ENCODE measurements at regions of chr10 and their contacts with region 1.

Region 1: DNA sequence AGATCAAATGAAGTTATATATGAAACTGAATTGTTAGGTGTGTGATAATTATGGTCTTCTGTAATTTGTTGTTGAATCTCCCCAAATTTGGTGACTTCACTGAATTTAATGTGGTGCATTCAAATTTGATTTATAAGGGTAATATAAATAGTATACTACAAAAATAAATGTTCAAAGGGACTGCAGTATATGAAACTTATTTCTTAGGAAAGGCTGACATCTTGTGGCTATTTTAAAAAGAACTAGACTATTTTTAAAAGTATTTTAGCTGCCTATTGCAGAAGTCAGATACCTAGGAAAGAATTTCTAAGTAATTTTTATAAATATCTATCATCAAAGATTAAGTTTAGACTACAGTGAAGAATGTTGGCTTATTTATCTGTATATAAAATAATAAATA is 36.6 kb downstream of the ATRNL1 start:
- DNase-seq: no peak
- ATAC-seq: peak in 1 of 4 donors; percentile 46
- H3K4me3 ChIP-seq: no peak overlapping the region
- H3K27ac ChIP-seq: no peak overlapping the region
- H3K4me1 ChIP-seq: no peaks in the 10 kb centered on the region
- H3K27me3 ChIP-seq: no peaks in the 10 kb centered on the region
- CTCF ChIP-seq: peak; percentile 10 to 64 (median 38)
- POLR2A ChIP-seq: no peak

Region 2: DNA sequence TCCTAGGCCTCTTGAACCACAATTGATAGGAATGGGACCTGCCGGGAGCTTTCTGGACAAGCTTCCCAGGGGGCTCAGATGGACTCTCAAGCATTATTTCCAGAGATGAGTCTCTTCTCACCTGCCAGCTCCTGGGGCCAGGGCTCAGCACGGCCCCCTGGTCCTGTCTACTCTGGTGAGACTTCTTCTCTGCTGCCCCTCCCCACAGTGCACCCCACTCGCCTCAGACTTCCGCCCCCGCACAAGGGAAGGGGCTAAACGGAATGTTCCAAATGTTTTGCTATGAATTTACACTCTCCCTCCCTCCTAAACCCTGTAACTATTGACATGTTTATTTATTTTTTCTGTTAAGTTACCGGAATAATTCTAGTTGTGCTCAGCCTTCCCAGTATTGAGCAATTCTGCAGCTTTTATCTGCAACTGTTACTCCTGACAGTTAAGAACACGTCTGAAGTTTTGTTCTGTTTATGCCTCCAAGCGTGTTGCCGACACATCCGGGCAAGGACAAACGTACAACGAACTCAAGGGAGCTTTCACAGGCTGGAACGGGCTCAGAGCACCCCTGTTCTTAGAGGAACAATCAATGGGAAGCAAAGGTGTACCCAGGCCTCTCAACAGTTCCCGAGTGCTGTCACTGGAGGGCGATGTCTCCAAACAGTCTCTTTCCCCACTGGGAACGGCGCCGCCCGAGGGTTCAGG is 253.0 kb before region 1 on chr10:
- intact Hi-C with region 1: loop called (anchors 1 to 5 kb)
- DNase-seq: peak; percentile 44 to 76 (median 57)
- ATAC-seq: peak in 3 of 4 donors; percentile 77 to 90 (median 80)
- H3K4me3 ChIP-seq: no peak overlapping the region
- H3K27ac ChIP-seq: no peak overlapping the region
- H3K4me1 ChIP-seq: peaks cover 0 to 34% (median 0%) of the 10 kb centered on the region in 12 donors
- H3K27me3 ChIP-seq: no peaks in the 10 kb centered on the region
- CTCF ChIP-seq: peak; percentile 49 to 78 (median 68)
- POLR2A ChIP-seq: no peak

Region 3: DNA sequence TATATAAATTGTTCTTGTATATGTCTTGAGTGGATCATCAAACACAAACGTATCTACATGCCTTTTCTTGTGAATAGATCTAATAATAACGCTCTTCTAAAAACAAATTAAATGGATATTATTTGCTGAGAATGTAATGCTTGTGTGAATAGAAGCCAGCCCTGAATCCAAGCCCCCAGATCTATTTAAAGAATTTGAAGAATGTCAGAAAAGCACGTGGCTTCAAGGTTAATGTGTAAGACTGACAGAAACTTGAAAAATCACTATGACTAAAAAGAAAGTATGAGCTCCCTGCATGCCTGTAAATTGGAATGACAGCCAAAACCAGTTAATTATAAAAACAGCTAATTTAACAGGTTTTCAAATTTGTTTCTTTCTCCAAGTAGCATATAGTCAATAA is 79.8 kb before region 1 on chr10:
- intact Hi-C with region 1: no loop called
- DNase-seq: no peak
- ATAC-seq: no peak
- H3K4me3 ChIP-seq: no peak overlapping the region
- H3K27ac ChIP-seq: no peak overlapping the region
- H3K4me1 ChIP-seq: peaks cover 0 to 7% (median 0%) of the 10 kb centered on the region in 12 donors
- H3K27me3 ChIP-seq: no peaks in the 10 kb centered on the region
- CTCF ChIP-seq: no peak
- POLR2A ChIP-seq: no peak